ENCODE measurements at regions of chr15 and their contacts with region 1.

Region 1: GRCh38 chr15:42056934-42057779 is 36.3 kb upstream of the PLA2G4E start:
- DNase-seq: peak; percentile 99
- ATAC-seq: peak; percentile 90
- H3K4me3 ChIP-seq: peak overlapping the region; percentile 58
- H3K27ac ChIP-seq: peak overlapping the region; percentile 97
- H3K4me1 ChIP-seq: peaks cover 19% of the 10 kb centered on the region
- H3K27me3 ChIP-seq: no peaks in the 10 kb centered on the region
- CTCF ChIP-seq: peak; percentile 92

Region 2: DNA sequence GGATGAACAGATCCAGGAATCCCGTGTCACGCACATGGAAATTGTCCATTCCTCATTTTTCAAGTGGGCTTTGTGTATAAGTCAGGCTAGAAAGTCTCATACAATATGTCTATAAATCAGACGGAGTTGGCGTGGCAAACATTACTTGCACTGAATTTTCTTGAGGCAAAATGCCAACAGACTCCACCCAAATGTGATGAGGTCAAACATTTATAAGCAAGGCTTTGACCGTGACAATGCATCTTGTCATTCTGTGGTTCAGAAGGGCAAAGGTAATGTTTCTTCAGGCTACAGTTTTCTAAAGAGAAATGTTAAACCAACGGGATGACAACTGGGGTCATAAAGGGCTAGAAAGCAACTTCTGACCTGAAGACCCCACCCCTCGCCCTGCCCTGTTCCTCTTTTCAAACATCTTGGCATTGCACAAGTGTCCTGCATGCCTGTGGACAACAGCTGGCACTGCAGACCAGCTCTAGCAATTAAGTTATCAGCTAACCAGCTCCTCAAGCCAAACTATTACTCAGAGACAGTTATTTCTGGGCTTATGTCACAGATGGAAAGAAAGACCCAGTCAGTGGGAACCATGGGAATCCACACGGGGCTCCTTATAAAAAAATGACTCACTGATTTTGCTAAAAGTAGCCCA is 126.8 kb before region 1 on chr15:
- CTCF ChIA-PET with region 1: no interaction called
- POLR2A ChIA-PET with region 1: no interaction called
- intact Hi-C with region 1: loop called (anchors 1 kb)
- DNase-seq: peak; percentile 98
- ATAC-seq: peak; percentile 47
- H3K4me3 ChIP-seq: no peak overlapping the region; the same call in 1 of the 2 replicates
- H3K27ac ChIP-seq: peak overlapping the region; percentile 97
- H3K4me1 ChIP-seq: peaks cover 93% of the 10 kb centered on the region
- H3K27me3 ChIP-seq: no peaks in the 10 kb centered on the region
- CTCF ChIP-seq: no peak; the same call in 1 of the 2 replicates

Region 3: GRCh38 chr15:41989259-41989933 is 67.8 kb before region 1 on chr15:
- CTCF ChIA-PET with region 1: interaction called, 14 read pairs
- POLR2A ChIA-PET with region 1: no interaction called
- intact Hi-C with region 1: loop called (anchors 1 kb)
- DNase-seq: peak; percentile 91
- ATAC-seq: peak; percentile 98
- H3K4me3 ChIP-seq: no peak overlapping the region
- H3K27ac ChIP-seq: no peak overlapping the region
- H3K4me1 ChIP-seq: no peaks in the 10 kb centered on the region
- H3K27me3 ChIP-seq: no peaks in the 10 kb centered on the region
- CTCF ChIP-seq: peak; percentile 97

Region 4: GRCh38 chr15:42092666-42093311 is 35.6 kb after region 1 on chr15:
- CTCF ChIA-PET with region 1: no interaction called
- POLR2A ChIA-PET with region 1: no interaction called
- intact Hi-C with region 1: no loop called
- DNase-seq: no peak
- ATAC-seq: peak; percentile 12
- H3K4me3 ChIP-seq: no peak overlapping the region
- H3K27ac ChIP-seq: no peak overlapping the region
- H3K4me1 ChIP-seq: peaks cover 24% of the 10 kb centered on the region
- H3K27me3 ChIP-seq: no peaks in the 10 kb centered on the region
- CTCF ChIP-seq: no peak